ENCODE measurements at regions of chr16 and their contacts with region 1.

Region 1: DNA sequence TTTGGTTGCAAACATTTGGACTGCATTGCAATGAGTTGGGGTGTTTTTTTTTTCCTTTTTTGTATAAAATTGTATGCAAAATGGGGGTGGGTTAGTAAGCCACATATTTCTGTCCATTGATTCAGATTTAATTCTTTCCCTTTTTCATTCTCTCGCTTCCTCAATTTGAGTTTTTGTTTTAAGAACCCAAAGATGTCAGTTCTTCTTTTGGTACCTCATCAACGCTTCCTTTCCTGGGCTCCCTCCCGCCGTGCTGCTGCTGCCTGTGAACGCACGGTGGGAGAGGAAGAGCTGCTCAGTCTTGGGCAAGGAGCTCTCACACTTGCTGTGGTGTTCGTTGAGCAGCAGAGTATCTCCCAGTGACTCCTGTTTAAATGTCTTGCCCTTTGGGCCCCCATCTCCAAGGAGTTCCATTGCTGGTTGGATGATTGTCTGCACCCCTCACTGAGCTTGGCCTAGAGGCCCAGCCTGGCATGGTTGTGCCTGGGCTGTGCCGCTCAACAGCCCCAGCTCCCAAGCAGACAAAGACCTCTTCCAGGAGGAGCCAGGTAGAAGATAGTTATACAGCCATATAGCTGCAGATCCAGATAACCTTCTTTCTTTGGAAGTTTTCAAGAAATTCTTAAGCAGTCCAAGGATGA is 13.6 kb downstream of the UBFD1 start:
- DNase-seq: no peak
- ATAC-seq: no peak
- H3K4me3 ChIP-seq: no peak overlapping the region
- H3K27ac ChIP-seq: no peak overlapping the region
- H3K4me1 ChIP-seq: no peaks in the 10 kb centered on the region
- H3K27me3 ChIP-seq: no peaks in the 10 kb centered on the region
- CTCF ChIP-seq: no peak
- POLR2A ChIP-seq: no peak
- RAD21 ChIP-seq: no peak

Region 2: GRCh38 chr16:23521037-23521743 is 49.9 kb before region 1 on chr16:
- CTCF ChIA-PET with region 1: no interaction called
- POLR2A ChIA-PET with region 1: no interaction called
- dilution Hi-C with region 1: no loop called
- in situ Hi-C with region 1: loop called (anchors 5 kb)
- intact Hi-C with region 1: no loop called
- DNase-seq: no peak
- ATAC-seq: no peak
- H3K4me3 ChIP-seq: no peak overlapping the region
- H3K27ac ChIP-seq: no peak overlapping the region
- H3K4me1 ChIP-seq: no peaks in the 10 kb centered on the region
- H3K27me3 ChIP-seq: no peaks in the 10 kb centered on the region
- CTCF ChIP-seq: no peak
- POLR2A ChIP-seq: no peak
- RAD21 ChIP-seq: no peak

Region 3: GRCh38 chr16:23624092-23624491 is 53.0 kb after region 1 on chr16:
- CTCF ChIA-PET with region 1: no interaction called
- POLR2A ChIA-PET with region 1: no interaction called
- dilution Hi-C with region 1: no loop called
- in situ Hi-C with region 1: loop called (anchors 5 kb)
- intact Hi-C with region 1: no loop called
- DNase-seq: no peak
- ATAC-seq: no peak
- H3K4me3 ChIP-seq: no peak overlapping the region
- H3K27ac ChIP-seq: no peak overlapping the region
- H3K4me1 ChIP-seq: no peaks in the 10 kb centered on the region
- H3K27me3 ChIP-seq: no peaks in the 10 kb centered on the region
- CTCF ChIP-seq: no peak
- POLR2A ChIP-seq: no peak
- RAD21 ChIP-seq: no peak

Measured in IMR-90 (cell line).